Activated CD4-positive, alpha-beta T cell treated with anti-CD3 and anti-CD28 coated beads for 36 hours (primary cell): ENCODE measurements at regions of chr17 and their contacts with region 1.

Region 1: GRCh38 chr17:82320956-82321927 is 3.8 kb upstream of the CD7 start:
- DNase-seq: peak; percentile 91
- ATAC-seq: peak; percentile 24
- H3K4me3 Mint-ChIP-seq: no peak overlapping the region
- H3K27ac Mint-ChIP-seq: no peak overlapping the region
- H3K4me1 Mint-ChIP-seq: peaks cover 25% of the 10 kb centered on the region
- H3K27me3 Mint-ChIP-seq: no peaks in the 10 kb centered on the region

Region 2: GRCh38 chr17:82037113-82037888 is 283.9 kb before region 1 on chr17 and contains the start of gene DCXR:
- CTCF ChIA-PET with region 1: no interaction called
- POLR2A ChIA-PET with region 1: interaction called, 10 read pairs
- intact Hi-C with region 1: loop called in 1 of 2 experiments (anchors 10 kb)
- DNase-seq: peak; percentile 97
- ATAC-seq: peak; percentile 97
- H3K4me3 Mint-ChIP-seq: peak within 1 kb of the TSS; percentile 82
- H3K27ac Mint-ChIP-seq: peak within 1 kb of the TSS; percentile 80
- H3K4me1 Mint-ChIP-seq: peaks cover 23% of the 10 kb centered on the region
- H3K27me3 Mint-ChIP-seq: no peaks in the 10 kb centered on the region
- total RNA-seq, gene DCXR: 105 to 166 TPM

Region 3: DNA sequence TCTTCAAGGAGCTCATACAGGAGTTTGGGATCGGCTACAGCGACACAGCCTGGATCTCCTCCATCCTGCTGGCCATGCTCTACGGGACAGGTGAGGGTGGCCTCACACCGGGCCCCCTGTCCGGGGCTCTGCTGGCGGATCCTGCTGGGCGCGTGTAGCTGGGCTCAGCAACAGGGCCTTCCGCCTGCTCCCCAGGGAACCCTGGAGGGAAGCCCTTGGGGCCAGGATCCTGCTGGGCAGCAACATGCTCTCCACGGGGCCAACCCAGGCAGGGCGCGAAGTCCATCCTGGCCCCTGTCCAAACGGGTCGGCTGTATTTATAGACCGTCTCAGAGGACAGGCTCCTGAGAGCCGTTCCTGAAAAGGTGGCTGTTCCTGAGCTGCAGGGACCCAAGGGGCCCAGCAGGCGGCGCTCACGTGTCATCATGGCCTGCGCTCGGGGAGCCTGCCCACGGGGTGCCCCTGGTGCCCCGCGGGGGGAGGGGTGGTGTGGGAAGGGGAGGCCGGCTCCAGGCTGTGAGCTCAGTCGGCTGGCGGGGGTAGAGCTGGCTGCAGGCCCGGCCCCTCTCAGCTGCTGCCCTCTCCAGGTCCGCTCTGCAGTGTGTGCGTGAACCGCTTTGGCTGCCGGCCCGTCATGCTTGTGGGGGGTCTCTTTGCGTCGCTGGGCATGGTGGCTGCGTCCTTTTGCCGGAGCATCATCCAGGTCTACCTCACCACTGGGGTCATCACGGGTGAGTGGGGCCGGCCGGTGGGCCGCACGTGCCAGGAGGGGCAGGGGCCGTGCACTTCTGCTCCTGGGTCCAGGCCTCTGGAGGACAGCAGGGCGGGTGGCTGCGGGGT is 84.9 kb before region 1 on chr17:
- CTCF ChIA-PET with region 1: interaction called, 4 read pairs
- POLR2A ChIA-PET with region 1: no interaction called
- intact Hi-C with region 1: loop called (anchors 2 kb)
- DNase-seq: peak; percentile 85
- ATAC-seq: peak; percentile 25
- H3K4me3 Mint-ChIP-seq: no peak overlapping the region
- H3K27ac Mint-ChIP-seq: no peak overlapping the region
- H3K4me1 Mint-ChIP-seq: peaks cover 46% of the 10 kb centered on the region
- H3K27me3 Mint-ChIP-seq: no peaks in the 10 kb centered on the region

Region 4: GRCh38 chr17:82273327-82274133 is 47.7 kb before region 1 on chr17 and contains the start of gene CSNK1D:
- CTCF ChIA-PET with region 1: no interaction called
- POLR2A ChIA-PET with region 1: interaction called, 3 read pairs
- intact Hi-C with region 1: loop called in 1 of 2 experiments (anchors 1 kb)
- DNase-seq: peak; percentile 96
- ATAC-seq: peak; percentile 81
- H3K4me3 Mint-ChIP-seq: peak within 1 kb of the TSS; percentile 90
- H3K27ac Mint-ChIP-seq: peak within 1 kb of the TSS; percentile 94
- H3K4me1 Mint-ChIP-seq: peaks cover 39% of the 10 kb centered on the region
- H3K27me3 Mint-ChIP-seq: no peaks in the 10 kb centered on the region
- total RNA-seq, gene CSNK1D: 118 to 182 TPM

Region 5: GRCh38 chr17:82297714-82298537 is 23.3 kb before region 1 on chr17:
- CTCF ChIA-PET with region 1: interaction called, 23 read pairs
- POLR2A ChIA-PET with region 1: interaction called, 94 read pairs
- intact Hi-C with region 1: loop called (anchors 1 kb)
- DNase-seq: peak; percentile 96
- ATAC-seq: peak; percentile 62
- H3K4me3 Mint-ChIP-seq: peak overlapping the region; percentile 80
- H3K27ac Mint-ChIP-seq: peak overlapping the region; percentile 100
- H3K4me1 Mint-ChIP-seq: peaks cover 70% of the 10 kb centered on the region
- H3K27me3 Mint-ChIP-seq: no peaks in the 10 kb centered on the region

Region 6: DNA sequence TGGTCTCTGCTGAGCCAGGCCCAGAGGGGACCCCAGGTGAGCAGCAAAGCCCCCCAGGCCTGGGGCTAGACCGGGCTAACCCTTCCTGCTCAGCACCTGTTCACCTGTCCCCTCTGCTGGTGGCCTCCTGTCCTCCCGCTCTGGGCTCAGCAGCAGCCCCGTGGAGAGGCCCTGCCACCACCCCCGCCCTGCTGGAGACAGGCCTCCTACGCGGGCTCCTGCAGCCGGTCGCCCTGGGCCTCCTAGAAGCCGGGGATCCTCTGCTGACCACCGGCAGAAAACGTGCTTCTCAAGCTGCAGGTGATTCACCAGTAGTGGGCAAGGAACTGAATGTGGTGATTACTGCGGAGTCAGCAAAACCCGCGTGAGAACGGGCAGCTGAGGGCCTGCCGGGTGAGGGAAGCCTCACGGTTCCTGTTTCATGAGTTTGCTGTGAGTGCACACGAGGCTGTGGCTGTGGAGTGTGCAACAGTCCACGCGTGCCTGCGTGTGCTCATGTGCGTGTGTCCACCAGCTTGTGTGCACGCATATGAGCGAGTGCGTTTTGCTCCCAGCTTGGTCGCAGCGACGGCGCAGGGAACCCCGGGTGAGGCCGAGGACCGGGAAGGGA is 11.5 kb after region 1 on chr17:
- CTCF ChIA-PET with region 1: interaction called, 11 read pairs
- POLR2A ChIA-PET with region 1: interaction called, 6 read pairs
- intact Hi-C with region 1: no loop called
- DNase-seq: peak; percentile 57
- ATAC-seq: peak; percentile 28
- H3K4me3 Mint-ChIP-seq: peak overlapping the region; percentile 67
- H3K27ac Mint-ChIP-seq: peak overlapping the region; percentile 60
- H3K4me1 Mint-ChIP-seq: peaks cover 29% of the 10 kb centered on the region
- H3K27me3 Mint-ChIP-seq: peaks cover 4% of the 10 kb centered on the region